Activated T-helper 2 cell treated with anti-CD3 and anti-CD28 coated beads, Interferon-gamma antibody, Interleukin-2, Interleukin-4, amounts not matched to agents 10 μg/mL and 5 μg/mL and 100 μg/mL, durations not matched to agents 14 hours and 24 hours and 36 hours (primary cell): ENCODE measurements at regions of chr7 and their contacts with region 1.

Region 1: DNA sequence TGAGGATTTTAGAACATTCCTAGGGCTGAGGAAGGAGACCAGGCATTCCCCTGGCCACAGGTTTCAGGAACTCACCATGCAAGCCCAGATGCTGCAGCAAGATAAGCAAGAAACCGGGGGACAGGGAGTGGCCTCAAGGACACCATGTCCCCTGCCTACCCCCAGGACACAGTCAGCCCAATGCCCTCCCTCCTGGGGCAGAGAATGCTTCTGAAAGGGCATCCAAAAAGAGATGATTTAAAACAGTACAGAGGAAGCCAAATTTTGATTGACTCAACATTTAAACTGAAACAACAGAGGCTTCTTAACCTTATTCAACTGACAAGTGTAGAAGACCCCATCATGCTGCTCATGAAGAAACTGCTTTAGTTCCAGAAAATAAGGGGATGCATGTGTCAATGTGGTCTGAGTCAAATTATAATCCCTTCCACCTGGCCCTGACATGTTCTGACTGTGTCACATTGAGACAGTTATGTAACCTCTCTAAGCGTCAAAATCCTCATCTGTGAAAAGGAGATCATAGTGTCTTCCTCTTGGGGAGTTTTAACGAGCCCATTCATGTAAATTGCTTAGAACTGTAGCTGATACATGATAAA is 60.0 kb downstream of the ICA1 start:
- DNase-seq: no peak
- H3K4me3 Mint-ChIP-seq: no peak overlapping the region
- H3K27ac Mint-ChIP-seq: peak overlapping the region; percentile 55
- H3K4me1 Mint-ChIP-seq: peaks cover 70% of the 10 kb centered on the region
- H3K27me3 Mint-ChIP-seq: peaks cover 6% of the 10 kb centered on the region

Region 2: DNA sequence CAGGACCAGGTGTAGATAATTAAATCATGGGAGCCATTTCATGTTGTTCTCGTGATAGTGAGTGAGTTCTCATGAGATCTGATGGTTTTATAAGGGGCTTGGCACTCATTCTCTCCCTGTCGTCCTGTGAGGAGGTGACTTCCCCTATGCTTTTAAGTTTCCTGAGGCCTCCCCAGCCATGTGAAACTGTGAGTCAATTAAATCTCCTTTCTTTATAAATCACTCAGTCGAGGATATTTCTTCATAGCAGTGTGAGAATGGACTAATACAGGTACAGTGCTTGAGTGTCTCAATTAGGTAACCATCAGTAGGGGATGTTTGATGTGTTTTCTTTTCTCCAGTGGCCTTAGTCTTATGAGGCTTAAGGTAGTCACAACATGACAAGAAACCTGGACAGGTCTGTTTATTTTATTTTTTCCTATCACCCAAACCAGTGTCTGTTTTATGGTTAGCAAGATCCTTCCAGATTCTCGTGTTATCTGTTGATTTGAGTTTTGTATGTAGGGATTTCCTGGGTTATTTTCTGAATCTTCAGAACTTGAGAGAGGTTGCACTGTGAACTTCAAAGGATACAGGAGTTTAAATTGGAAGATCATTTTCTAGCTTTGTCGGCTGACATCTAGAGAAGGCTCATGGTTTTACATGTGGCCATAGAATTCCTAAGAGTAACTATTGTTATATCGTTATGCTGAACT is 529.3 kb before region 1 on chr7:
- intact Hi-C with region 1: loop called (anchors 5 kb)
- DNase-seq: no peak
- H3K4me3 Mint-ChIP-seq: peak overlapping the region; percentile 11
- H3K27ac Mint-ChIP-seq: peak overlapping the region; percentile 88
- H3K4me1 Mint-ChIP-seq: peaks cover 31% of the 10 kb centered on the region
- H3K27me3 Mint-ChIP-seq: no peaks in the 10 kb centered on the region

Region 3: GRCh38 chr7:7851381-7851780 is 350.6 kb before region 1 on chr7:
- intact Hi-C with region 1: loop called (anchors 5 kb)
- DNase-seq: no peak
- H3K4me3 Mint-ChIP-seq: no peak overlapping the region
- H3K27ac Mint-ChIP-seq: no peak overlapping the region
- H3K4me1 Mint-ChIP-seq: peaks cover 35% of the 10 kb centered on the region
- H3K27me3 Mint-ChIP-seq: no peaks in the 10 kb centered on the region

Region 4: GRCh38 chr7:8176370-8177081 is 25.4 kb before region 1 on chr7:
- intact Hi-C with region 1: loop called (anchors 1 kb)
- DNase-seq: peak; percentile 62
- H3K4me3 Mint-ChIP-seq: peak overlapping the region; percentile 62
- H3K27ac Mint-ChIP-seq: peak overlapping the region; percentile 95
- H3K4me1 Mint-ChIP-seq: peaks cover 49% of the 10 kb centered on the region
- H3K27me3 Mint-ChIP-seq: no peaks in the 10 kb centered on the region

Region 5: GRCh38 chr7:8684426-8684825 is 482.5 kb after region 1 on chr7:
- intact Hi-C with region 1: no loop called
- DNase-seq: no peak
- H3K4me3 Mint-ChIP-seq: no peak overlapping the region
- H3K27ac Mint-ChIP-seq: no peak overlapping the region
- H3K4me1 Mint-ChIP-seq: no peaks in the 10 kb centered on the region
- H3K27me3 Mint-ChIP-seq: no peaks in the 10 kb centered on the region